Caco-2 (cell line): ENCODE measurements at regions of chr2 and their contacts with region 1.

Region 1: GRCh38 chr2:164054651-164055050 is 318.8 kb upstream of the FIGN start:
- DNase-seq: no peak
- H3K4me3 ChIP-seq: no peak overlapping the region
- H3K4me3 Mint-ChIP-seq: no peak overlapping the region
- H3K27ac Mint-ChIP-seq: no peak overlapping the region
- H3K4me1 ChIP-seq: no peaks in the 10 kb centered on the region
- H3K4me1 Mint-ChIP-seq: peaks cover 8% of the 10 kb centered on the region
- H3K27me3 ChIP-seq: no peaks in the 10 kb centered on the region
- H3K27me3 Mint-ChIP-seq: peaks cover 4% of the 10 kb centered on the region
- CTCF ChIP-seq: no peak

Region 2: DNA sequence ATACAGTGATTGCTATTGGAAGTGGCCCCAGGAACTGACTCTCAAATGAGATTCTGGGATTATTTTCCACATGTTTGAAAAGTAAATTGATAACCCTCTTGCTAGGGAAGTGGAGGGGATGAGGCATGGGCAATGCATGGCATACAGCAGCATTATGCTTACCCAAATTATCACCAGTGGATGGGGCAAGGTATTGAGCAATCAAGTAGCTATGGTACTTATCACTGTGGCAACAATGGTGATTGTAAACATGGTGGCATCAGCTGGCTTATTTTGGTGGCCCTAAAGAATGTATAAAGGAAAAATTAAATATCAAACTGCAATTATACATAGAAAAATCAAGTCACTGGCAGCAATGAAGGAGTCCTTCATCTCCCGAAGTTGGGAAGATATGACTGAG is 473.9 kb before region 1 on chr2:
- CTCF ChIA-PET with region 1: no interaction called
- POLR2A ChIA-PET with region 1: no interaction called
- intact Hi-C with region 1: loop called (anchors 1 kb)
- DNase-seq: no peak
- H3K4me3 ChIP-seq: no peak overlapping the region
- H3K4me3 Mint-ChIP-seq: no peak overlapping the region
- H3K27ac Mint-ChIP-seq: no peak overlapping the region
- H3K4me1 ChIP-seq: no peaks in the 10 kb centered on the region
- H3K4me1 Mint-ChIP-seq: no peaks in the 10 kb centered on the region
- H3K27me3 ChIP-seq: no peaks in the 10 kb centered on the region
- H3K27me3 Mint-ChIP-seq: no peaks in the 10 kb centered on the region
- CTCF ChIP-seq: no peak